Thyroid gland (tissue), 4 donors: ENCODE measurements at regions of chr17 and their contacts with region 1.

Region 1: DNA sequence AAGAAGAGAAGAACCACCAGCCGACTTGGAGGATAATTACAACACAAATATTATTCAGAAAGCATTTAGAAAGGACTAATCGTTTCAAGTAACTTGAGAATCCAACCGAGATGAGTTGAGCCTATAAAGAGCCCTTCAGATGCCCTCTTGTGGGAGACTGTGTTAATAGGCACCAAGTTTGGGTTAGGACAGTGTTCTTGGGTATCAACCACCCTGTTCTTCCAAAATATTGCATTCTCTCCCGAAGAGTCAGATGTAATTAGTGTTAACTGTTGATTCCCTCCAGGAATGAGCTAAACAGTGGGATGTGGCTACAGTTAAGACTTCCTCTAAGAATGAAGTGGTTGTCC is 87.8 kb upstream of the NOL11 start:
- DNase-seq: no peak
- H3K4me3 ChIP-seq: no peak overlapping the region
- H3K27ac ChIP-seq: peak overlapping the region; percentile 78 to 89 (median 84)
- H3K4me1 ChIP-seq: peaks cover 11 to 37% of the 10 kb centered on the region in 2 donors
- H3K27me3 ChIP-seq: no peaks in the 10 kb centered on the region
- CTCF ChIP-seq: peak in 4 of 6 experiments; percentile 33 to 46 (median 38)
- POLR2A ChIP-seq: no peak

Region 2: DNA sequence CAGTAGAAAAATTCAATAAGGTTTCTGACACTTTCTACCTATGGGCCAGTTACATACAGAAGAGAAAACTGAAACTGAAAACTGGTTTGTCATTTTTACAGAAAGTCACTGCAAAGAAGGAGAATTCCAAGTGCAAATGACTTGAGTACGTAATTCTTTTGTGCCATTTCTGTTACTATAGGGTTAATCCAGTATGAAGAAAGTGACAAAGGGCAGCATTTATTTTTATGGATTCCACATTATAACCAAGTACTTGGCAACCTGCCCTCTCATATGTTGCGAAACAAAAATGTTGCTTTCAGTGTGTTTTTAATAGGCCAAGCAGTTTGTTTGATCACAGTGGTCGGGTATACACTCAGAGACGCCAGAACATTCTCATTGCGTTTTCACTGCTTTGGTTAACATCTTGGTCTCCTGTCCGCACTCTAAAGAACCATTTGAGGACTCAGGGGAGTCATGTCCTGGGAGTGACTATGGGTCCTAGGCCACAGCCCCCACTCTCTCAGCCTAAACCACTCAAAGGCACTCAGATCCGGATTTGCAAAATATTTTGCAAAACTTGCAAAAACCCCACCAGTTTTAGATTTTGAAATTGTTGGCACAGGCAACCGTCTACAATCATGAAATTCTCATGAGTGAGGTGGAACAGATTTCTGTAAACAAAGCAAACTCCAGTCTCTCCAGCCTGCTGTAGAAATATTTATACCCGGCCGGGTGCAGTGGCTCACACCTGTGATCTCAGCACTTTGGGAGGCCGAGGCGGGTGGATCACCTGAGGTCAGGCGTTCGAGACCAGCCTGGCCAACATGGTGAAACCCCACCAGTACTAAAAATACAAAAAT is 369.6 kb before region 1 on chr17:
- intact Hi-C with region 1: no loop called
- DNase-seq: peak; percentile 74 to 76
- H3K4me3 ChIP-seq: no peak overlapping the region
- H3K27ac ChIP-seq: peak overlapping the region; percentile 36 to 93 (median 75)
- H3K4me1 ChIP-seq: peaks cover 14 to 18% of the 10 kb centered on the region in 2 donors
- H3K27me3 ChIP-seq: no peaks in the 10 kb centered on the region
- CTCF ChIP-seq: no peak
- POLR2A ChIP-seq: peak in 1 of 2 donors; percentile 42

Region 3: DNA sequence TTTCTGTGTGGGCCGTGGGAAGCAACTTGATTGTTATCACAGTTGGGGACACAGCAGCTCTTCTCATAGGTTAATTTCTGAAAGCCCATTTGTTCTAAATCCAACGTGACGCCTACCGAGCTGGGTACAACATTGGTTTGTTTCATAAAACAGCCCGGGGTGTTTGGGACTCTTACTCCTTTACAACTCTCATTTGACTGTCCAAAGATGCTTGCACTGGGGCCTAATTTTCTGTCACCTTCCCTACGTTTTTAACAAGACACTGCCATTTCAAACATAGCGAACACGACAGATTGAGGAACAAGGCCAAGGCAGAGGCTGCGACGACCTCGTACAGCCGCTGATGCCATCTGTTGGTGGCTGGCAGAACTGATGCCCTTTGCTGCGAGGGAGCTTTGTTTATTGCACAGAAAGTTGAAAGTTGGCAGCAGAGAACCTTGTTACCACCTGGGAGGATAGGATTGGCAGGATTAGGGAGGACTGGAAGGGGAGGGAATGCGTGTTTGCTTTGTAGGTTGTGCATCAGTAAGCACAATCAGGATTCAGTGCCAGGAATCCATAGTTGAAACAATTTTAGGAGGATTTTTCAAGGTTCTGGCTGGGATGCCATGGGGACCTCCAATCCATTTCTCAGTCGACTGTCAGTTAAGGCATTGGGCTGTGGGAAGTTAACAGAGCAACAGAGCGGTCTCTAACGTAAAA is 154.6 kb before region 1 on chr17:
- intact Hi-C with region 1: loop called (anchors 5 kb)
- DNase-seq: peak; percentile 87 to 89
- H3K4me3 ChIP-seq: no peak overlapping the region
- H3K27ac ChIP-seq: peak overlapping the region; percentile 5 to 75 (median 56)
- H3K4me1 ChIP-seq: peaks cover 4 to 37% of the 10 kb centered on the region in 2 donors
- H3K27me3 ChIP-seq: no peaks in the 10 kb centered on the region
- CTCF ChIP-seq: peak; percentile 72 to 97 (median 93)
- POLR2A ChIP-seq: peak in 1 of 2 donors; percentile 10